B cell (primary cell): ENCODE measurements at regions of chr9 and their contacts with region 1.

Region 1: DNA sequence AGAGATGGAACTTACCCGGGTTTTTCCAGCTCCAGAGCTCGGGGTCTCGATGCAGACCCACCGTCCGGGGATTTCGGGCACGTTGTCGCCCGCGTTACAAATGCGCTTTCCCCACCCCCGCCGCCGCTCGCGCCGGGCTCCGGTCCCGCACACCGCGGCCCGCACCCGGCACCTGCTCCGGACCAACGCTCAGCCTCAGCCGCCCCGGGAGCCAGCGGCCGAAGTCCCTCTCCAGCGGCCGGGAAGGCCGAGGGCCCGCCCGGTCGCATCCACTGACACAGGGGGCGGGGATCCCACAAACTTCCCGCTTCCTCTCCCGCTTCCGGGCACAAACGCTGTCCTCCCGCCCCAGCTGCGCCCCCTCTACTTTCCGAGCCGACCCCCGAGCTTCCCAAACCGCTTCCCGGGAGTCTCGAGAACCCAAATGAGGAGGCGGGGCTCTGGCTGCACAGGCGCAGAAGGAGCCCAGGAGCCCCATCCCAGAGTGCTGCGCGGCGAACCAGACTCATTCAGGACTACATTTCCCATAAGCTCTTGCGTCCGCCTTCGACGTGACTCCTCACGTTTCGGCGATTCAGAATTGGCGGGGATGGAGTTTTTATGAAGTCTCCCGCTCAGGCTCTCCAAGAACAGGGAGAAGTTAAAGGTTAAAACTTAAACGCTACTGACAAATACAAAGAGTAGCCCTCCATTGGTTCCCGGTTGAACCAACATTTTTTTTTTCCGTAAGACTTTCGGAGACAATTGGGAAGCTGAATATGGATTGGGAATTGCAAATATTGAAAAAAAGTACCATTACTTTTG is at the start of gene ZNF782:
- DNase-seq: peak; percentile 89
- ATAC-seq: peak; percentile 93
- H3K4me3 ChIP-seq: peak within 1 kb of the TSS; percentile 84 to 100 (median 89)
- H3K4me3 Mint-ChIP-seq: peak within 1 kb of the TSS; percentile 98
- H3K27ac ChIP-seq: peak within 1 kb of the TSS; percentile 56 to 82
- H3K27ac Mint-ChIP-seq: peak within 1 kb of the TSS; percentile 97
- H3K4me1 ChIP-seq: peaks cover 12 to 18% of the 10 kb centered on the region in 2 donors
- H3K4me1 Mint-ChIP-seq: peaks cover 39% of the 10 kb centered on the region
- H3K27me3 ChIP-seq: peaks cover 0 to 7% (median 0%) of the 10 kb centered on the region in 4 experiments
- H3K27me3 Mint-ChIP-seq: peaks cover 5% of the 10 kb centered on the region
- CTCF ChIP-seq: no peak
- total RNA-seq, gene ZNF782: 14.6 and 16.3 TPM in 2 replicates

Region 2: GRCh38 chr9:96327694-96328352 is 526.5 kb before region 1 on chr9:
- CTCF ChIA-PET with region 1: interaction called, 4 read pairs
- POLR2A ChIA-PET with region 1: interaction called, 5 read pairs
- intact Hi-C with region 1: loop called (anchors 10 kb)
- DNase-seq: peak; percentile 64
- ATAC-seq: peak; percentile 56
- H3K4me3 ChIP-seq: no peak overlapping the region
- H3K4me3 Mint-ChIP-seq: no peak overlapping the region
- H3K27ac ChIP-seq: no peak overlapping the region
- H3K27ac Mint-ChIP-seq: no peak overlapping the region
- H3K4me1 ChIP-seq: no peaks in the 10 kb centered on the region
- H3K4me1 Mint-ChIP-seq: no peaks in the 10 kb centered on the region
- H3K27me3 ChIP-seq: no peaks in the 10 kb centered on the region
- H3K27me3 Mint-ChIP-seq: no peaks in the 10 kb centered on the region
- CTCF ChIP-seq: peak; percentile 91

Region 3: DNA sequence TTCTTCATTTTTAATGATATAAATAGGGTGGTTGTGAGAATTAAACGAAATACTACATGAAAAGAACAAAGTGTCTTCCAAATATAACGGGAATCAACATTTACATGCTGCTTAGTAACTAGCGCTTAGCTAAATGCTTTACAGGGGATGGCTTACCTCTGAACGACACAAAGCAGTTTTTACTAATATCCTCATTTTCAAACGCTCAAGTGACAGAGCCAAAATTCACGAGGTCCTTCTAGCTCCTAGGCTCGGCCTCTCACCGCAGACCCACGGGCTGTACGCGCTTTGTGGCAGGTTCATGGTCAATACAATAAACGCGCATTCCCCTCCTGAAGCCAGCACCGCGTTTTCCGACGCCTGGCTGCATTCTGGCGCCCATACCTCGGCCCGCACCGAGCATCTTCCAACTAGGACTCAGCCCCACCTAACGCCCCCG is 76.8 kb before region 1 on chr9:
- CTCF ChIA-PET with region 1: no interaction called
- POLR2A ChIA-PET with region 1: no interaction called
- intact Hi-C with region 1: loop called (anchors 2 kb)
- DNase-seq: no peak
- ATAC-seq: no peak
- H3K4me3 ChIP-seq: peak overlapping the region; percentile 62 to 91 (median 80)
- H3K4me3 Mint-ChIP-seq: peak overlapping the region; percentile 97
- H3K27ac ChIP-seq: peak overlapping the region; percentile 57 to 90
- H3K27ac Mint-ChIP-seq: peak overlapping the region; percentile 95
- H3K4me1 ChIP-seq: peaks cover 7 to 14% of the 10 kb centered on the region in 2 donors
- H3K4me1 Mint-ChIP-seq: peaks cover 31% of the 10 kb centered on the region
- H3K27me3 ChIP-seq: no peaks in the 10 kb centered on the region
- H3K27me3 Mint-ChIP-seq: no peaks in the 10 kb centered on the region
- CTCF ChIP-seq: no peak

Region 4: GRCh38 chr9:97237951-97238851 is 383.9 kb after region 1 on chr9:
- CTCF ChIA-PET with region 1: interaction called, 3 read pairs
- POLR2A ChIA-PET with region 1: no interaction called
- intact Hi-C with region 1: loop called (anchors 5 kb)
- DNase-seq: peak; percentile 84
- ATAC-seq: peak; percentile 92
- H3K4me3 ChIP-seq: peak overlapping the region; percentile 44 to 88 (median 74)
- H3K4me3 Mint-ChIP-seq: peak overlapping the region; percentile 94
- H3K27ac ChIP-seq: peak overlapping the region; percentile 62 to 71
- H3K27ac Mint-ChIP-seq: peak overlapping the region; percentile 85
- H3K4me1 ChIP-seq: peaks cover 8 to 10% of the 10 kb centered on the region in 2 donors
- H3K4me1 Mint-ChIP-seq: peaks cover 17% of the 10 kb centered on the region
- H3K27me3 ChIP-seq: no peaks in the 10 kb centered on the region
- H3K27me3 Mint-ChIP-seq: peaks cover 2% of the 10 kb centered on the region
- CTCF ChIP-seq: no peak

Region 5: DNA sequence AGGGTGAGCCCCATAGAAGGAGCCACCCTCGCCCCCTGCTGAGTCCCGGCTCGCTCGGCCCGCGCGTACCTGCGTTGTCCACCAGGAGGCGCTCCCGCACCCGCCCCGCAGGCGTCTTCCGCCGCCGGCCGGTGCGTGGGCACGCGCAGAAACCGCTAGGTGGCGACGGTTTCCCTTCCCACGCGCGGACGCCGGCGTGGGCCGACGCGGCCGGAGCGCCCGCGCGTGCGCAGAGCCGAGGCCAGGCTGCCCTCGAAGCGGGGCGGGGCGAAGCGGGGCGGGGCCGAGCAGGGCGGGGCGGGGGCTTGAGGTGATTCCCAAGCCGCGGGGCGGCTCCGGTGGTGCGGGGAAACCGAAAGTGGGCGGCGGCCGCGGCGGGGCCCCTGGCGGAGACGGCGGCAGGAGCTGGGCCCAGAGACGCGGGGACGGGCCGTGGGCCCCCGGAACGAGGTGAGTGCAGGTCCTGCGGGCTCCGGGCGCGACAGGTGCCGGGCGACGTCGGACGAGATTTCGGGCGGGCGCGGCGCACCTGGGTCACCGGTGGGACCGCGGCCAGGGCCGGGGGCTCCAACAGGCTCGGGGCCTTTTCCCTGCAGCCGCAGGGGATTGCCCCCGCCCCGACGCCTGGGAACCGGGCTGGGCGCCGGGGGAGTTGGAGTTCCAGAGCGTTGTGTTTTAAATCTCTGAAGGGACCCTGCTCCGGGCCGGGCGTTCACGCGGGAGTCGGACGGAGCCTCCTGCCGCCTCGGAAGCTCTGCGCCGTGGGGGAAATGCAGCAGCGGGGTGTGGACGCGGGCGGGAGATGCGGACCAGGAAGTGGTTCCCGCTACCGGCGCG is 557.7 kb after region 1 on chr9 and contains the start of gene TDRD7:
- CTCF ChIA-PET with region 1: interaction called, 6 read pairs
- POLR2A ChIA-PET with region 1: interaction called, 3 read pairs
- intact Hi-C with region 1: loop called (anchors 1 kb)
- DNase-seq: peak; percentile 96
- ATAC-seq: peak; percentile 91
- H3K4me3 ChIP-seq: peak within 1 kb of the TSS; percentile 57 to 92 (median 85)
- H3K4me3 Mint-ChIP-seq: peak within 1 kb of the TSS; percentile 77
- H3K27ac ChIP-seq: peak within 1 kb of the TSS; percentile 61 to 79
- H3K27ac Mint-ChIP-seq: peak within 1 kb of the TSS; percentile 82
- H3K4me1 ChIP-seq: peaks cover 18% of the 10 kb centered on the region in 2 donors
- H3K4me1 Mint-ChIP-seq: peaks cover 34% of the 10 kb centered on the region
- H3K27me3 ChIP-seq: peaks cover 0 to 3% (median 0%) of the 10 kb centered on the region in 4 experiments
- H3K27me3 Mint-ChIP-seq: peaks cover 10% of the 10 kb centered on the region
- CTCF ChIP-seq: peak; percentile 100
- total RNA-seq, gene TDRD7: 19.7 and 20.6 TPM in 2 replicates

Region 6: DNA sequence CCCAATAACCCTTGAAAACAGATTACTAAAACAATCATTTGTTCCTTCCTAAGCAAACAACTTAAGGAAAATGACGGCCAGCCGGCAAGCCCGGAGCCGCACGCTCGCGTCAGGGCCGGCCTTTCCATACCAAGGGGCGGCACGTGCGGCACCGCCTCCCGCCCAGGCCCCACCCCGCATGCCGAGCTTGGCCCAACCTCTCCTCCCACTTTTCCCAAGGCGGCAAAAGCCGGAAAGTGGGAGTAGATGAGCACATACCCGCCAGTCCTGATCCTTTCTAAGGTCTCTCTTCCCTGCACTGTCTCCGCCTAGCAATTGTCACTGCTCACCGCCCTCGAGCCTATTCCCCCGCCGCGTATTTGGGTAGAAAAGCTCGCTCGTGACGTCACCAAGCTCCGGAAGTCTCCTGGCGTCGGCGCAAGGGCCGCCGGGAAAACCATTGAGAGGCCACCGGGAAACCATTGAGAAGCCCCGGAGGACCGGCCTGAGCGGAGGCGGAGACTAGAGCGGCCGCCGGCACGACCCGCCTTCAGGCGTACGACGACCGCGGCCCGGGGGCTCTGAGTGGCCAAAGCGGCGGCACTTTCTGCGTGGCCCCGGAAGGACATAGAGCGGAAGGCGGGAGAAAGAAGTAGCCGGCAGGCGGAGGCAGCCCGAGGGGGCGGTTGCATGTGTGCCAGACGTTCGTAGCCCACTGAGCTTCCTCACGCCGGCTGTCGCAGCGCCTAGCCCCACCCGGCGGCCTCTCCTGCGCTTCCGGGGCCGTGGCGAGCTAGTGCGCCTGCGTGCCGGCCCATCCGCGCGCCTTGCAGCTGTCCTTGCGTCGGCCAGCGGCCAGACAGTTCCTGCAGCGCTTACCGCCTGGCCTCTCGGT is 778.9 kb after region 1 on chr9 and contains the starts of genes NCBP1 and TSTD2:
- CTCF ChIA-PET with region 1: interaction called, 6 read pairs
- POLR2A ChIA-PET with region 1: no interaction called
- intact Hi-C with region 1: loop called (anchors 1 kb)
- DNase-seq: peak; percentile 99
- ATAC-seq: peak; percentile 91
- H3K4me3 ChIP-seq: peak within 1 kb of the TSS; percentile 94 to 99 (median 95)
- H3K4me3 Mint-ChIP-seq: peak within 1 kb of the TSS; percentile 97
- H3K27ac ChIP-seq: peak within 1 kb of the TSS; percentile 92 to 93
- H3K27ac Mint-ChIP-seq: peak within 1 kb of the TSS; percentile 98
- H3K4me1 ChIP-seq: peaks cover 26 to 35% of the 10 kb centered on the region in 2 donors
- H3K4me1 Mint-ChIP-seq: peaks cover 58% of the 10 kb centered on the region
- H3K27me3 ChIP-seq: no peaks in the 10 kb centered on the region
- H3K27me3 Mint-ChIP-seq: no peaks in the 10 kb centered on the region
- CTCF ChIP-seq: no peak
- total RNA-seq, gene NCBP1: 38.0 and 40.7 TPM in 2 replicates
- total RNA-seq, gene TSTD2: 29.2 and 31.1 TPM in 2 replicates